Pancreas (tissue), 10 donors: ENCODE measurements at regions of chr22 and their contacts with region 1.

Region 1: DNA sequence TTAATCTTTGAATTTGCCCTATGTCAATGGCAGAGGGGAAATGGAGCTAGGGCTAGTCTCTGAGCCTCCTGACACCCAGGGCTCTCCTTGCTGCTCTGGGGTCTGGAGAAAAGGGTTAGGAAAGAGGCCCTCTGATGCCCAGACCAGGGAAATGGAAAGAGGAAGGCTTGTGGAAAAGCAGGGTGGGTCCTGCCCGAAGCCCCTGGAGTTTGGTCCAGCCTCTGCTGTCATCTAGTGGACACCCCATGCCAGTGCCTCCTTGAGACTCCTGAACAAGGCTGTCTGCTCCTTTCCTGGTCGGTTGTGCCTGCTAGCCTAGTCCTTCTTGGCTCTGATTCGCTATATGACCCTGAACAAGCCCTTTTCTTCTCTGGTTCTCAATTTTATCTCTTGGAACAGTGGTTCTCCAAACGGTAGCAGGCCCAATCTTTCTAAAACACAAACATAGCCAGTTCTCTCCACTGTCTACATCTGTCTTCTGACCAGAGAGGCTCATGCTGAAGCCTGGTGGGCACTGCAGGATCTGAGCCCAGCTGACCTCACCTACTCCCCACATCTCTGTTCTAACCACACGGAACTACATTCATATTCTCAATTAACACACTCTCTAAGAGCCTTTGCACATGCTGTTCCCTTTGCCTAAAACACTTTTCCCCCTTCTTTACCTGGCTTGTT is 8.8 kb upstream of the PLA2G3 start:
- DNase-seq: peak in 5 of 6 donors; percentile 65 to 84 (median 70)
- ATAC-seq: peak; percentile 93 to 100 (median 98)
- H3K4me3 ChIP-seq: no peak overlapping the region
- H3K27ac ChIP-seq: peak overlapping the region in 1 of 4 donors; percentile 22
- H3K4me1 ChIP-seq: peaks cover 0 to 2% (median 0%) of the 10 kb centered on the region in 3 donors
- H3K27me3 ChIP-seq: no peaks in the 10 kb centered on the region
- CTCF ChIP-seq: peak; percentile 67 to 80 (median 75)

Region 2: GRCh38 chr22:30830907-30831306 is 318.2 kb before region 1 on chr22:
- intact Hi-C with region 1: no loop called
- DNase-seq: peak in 1 of 6 donors; percentile 18
- ATAC-seq: peak; percentile 48 to 85 (median 72)
- H3K4me3 ChIP-seq: no peak overlapping the region
- H3K27ac ChIP-seq: no peak overlapping the region
- H3K4me1 ChIP-seq: no peaks in the 10 kb centered on the region
- H3K27me3 ChIP-seq: no peaks in the 10 kb centered on the region
- CTCF ChIP-seq: no peak

Region 3: GRCh38 chr22:31107178-31107893 is 41.8 kb before region 1 on chr22 and contains the start of gene SELENOM:
- intact Hi-C with region 1: loop called in 1 of 3 experiments (anchors 5 kb)
- DNase-seq: peak; percentile 92 to 99 (median 98)
- ATAC-seq: peak; percentile 90 to 96 (median 92)
- H3K4me3 ChIP-seq: peak within 1 kb of the TSS; percentile 50 to 76 (median 64)
- H3K27ac ChIP-seq: peak within 1 kb of the TSS; percentile 76 to 91 (median 82)
- H3K4me1 ChIP-seq: peaks cover 0 to 7% (median 0%) of the 10 kb centered on the region in 3 donors
- H3K27me3 ChIP-seq: no peaks in the 10 kb centered on the region
- CTCF ChIP-seq: peak; percentile 80 to 92 (median 90)
- total RNA-seq, gene SELENOM: 46.1 to 62.4 (median 54.4) TPM